Left ventricle myocardium inferior (tissue), 1 donor: ENCODE measurements at regions of chr1 and their contacts with region 1.

Region 1: DNA sequence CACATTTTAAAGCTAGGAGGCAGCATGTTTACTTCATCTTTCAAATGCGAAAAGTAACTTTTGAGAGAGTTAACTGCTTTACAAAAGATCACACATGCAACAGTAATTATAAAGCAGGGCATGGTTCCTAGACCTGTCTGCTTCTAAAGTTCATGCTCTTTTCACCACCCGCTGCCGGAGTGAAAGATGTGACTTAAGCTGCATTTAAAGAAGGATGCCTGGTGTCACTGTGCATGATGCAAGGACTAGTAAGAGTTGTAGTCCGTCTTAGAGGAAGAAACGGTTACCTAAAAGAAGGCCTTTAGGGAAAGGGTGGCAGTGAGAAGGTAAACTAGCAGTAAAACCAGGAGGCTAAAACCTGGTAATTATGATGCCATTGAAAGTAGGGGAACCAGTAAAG is 1689.1 kb downstream of the KCNT2 start:
- DNase-seq: no peak
- H3K4me3 ChIP-seq: no peak overlapping the region
- H3K27ac ChIP-seq: no peak overlapping the region
- H3K4me1 ChIP-seq: no peaks in the 10 kb centered on the region
- H3K27me3 ChIP-seq: no peaks in the 10 kb centered on the region
- CTCF ChIP-seq: no peak

Region 2: GRCh38 chr1:194857413-194857812 is 61.7 kb before region 1 on chr1:
- intact Hi-C with region 1: loop called (anchors 10 kb)
- DNase-seq: no peak
- H3K4me3 ChIP-seq: no peak overlapping the region
- H3K27ac ChIP-seq: no peak overlapping the region
- H3K4me1 ChIP-seq: no peaks in the 10 kb centered on the region
- H3K27me3 ChIP-seq: no peaks in the 10 kb centered on the region
- CTCF ChIP-seq: no peak